Breast epithelium (tissue), 4 donors: ENCODE measurements at regions of chr6 and their contacts with region 1.

Region 1: DNA sequence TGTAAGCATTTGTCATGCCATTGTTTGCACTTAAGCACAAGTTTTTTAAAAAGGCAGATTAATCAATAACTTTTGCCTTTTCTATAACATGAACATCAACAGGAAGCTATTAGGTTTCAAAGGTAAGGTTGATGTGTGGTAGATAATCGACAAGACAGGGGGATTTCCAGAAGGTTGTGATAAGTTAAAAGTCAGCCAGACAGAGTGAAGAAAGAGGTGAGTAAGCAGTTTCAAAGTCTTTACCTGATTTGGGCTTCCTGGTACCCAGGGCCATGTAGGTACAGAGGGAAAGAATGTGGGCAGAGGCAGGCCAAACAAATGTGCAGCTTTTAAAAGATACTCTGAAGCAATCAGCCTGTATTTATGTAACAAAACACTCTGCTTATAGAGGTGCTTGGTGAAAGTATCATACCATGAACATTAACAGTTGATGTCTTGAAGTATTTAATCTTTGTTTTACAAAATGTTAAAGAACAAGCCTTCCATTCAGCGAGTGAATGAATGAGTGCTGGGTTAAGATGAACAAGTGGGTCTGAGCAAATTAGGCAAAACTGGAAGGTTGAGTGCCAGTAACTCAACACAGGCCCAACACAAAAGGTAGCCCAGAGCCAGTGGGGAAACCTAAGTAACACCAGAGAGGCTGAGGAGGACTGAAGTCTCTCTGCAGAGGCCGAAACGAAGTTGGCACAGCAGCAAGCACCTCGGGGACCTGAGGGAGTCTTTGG is 60.2 kb downstream of the LRRC1 start:
- DNase-seq: no peak
- H3K4me3 ChIP-seq: no peak overlapping the region
- H3K27ac ChIP-seq: peak overlapping the region in 1 of 2 donors; percentile 27
- H3K4me1 ChIP-seq: peaks cover 0 to 4% of the 10 kb centered on the region in 2 donors
- H3K27me3 ChIP-seq: no peaks in the 10 kb centered on the region
- CTCF ChIP-seq: no peak
- POLR2A ChIP-seq: no peak

Region 2: DNA sequence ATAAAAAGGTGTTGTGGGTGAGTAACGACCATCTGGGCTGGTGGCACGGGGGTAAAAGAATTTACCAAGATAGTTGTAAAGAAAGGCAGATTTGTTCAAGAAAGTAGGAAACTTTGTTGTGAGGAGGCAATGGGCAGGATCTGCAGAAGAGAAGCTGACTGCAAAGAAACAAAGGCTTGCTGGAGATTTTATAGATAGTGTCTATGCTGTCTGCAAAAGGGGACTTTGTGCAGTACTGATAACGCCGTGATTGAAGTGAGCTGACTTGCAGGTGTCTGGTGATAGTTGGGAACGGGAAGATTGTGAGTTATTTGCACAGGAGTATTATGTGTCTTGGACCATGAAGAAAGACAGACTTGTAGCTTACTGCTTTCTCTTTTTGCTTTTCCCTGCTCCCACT is 908.7 kb before region 1 on chr6:
- intact Hi-C with region 1: loop called (anchors 5 kb)
- DNase-seq: no peak
- H3K4me3 ChIP-seq: no peak overlapping the region
- H3K27ac ChIP-seq: no peak overlapping the region
- H3K4me1 ChIP-seq: no peaks in the 10 kb centered on the region
- H3K27me3 ChIP-seq: no peaks in the 10 kb centered on the region
- CTCF ChIP-seq: no peak
- POLR2A ChIP-seq: no peak

Region 3: DNA sequence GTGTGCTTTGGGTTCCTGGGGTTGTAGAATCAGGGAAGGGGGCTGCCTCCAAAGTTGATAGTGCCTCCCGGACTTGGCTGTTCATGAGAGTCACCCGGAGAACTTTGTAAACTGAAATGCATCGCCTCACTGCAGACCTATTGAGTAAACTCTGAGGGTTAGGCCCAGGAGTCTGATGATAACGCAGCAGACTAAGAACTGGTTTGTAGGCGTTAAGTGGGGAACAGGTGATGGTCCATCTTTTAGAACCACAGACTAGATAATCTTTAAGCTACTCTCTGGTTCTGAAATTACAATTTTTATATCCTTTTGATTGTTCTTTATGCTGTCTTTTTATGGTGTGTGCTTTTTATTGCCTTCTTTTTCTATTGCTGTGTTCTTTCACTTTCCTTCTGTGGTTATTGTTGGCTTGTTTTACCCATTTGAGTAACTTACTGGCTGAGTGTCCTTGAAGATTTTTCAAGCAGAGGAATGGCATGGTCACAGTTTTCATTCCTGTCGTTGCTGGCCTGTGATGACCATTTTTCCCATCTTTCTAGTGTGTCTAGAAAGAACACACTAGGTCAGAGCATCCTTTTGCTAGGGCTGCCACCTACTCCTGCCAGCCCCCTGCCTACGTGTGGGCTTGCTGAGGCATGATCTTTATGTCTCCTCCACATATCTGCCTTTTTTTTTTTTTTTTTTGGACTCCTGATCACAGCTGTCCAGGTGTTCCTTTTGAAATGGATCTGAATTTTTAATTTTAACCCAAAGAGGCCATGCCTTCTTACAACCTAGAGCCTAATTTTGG is 29.3 kb before region 1 on chr6:
- intact Hi-C with region 1: no loop called
- DNase-seq: peak in 1 of 2 donors; percentile 63
- H3K4me3 ChIP-seq: no peak overlapping the region
- H3K27ac ChIP-seq: peak overlapping the region in 1 of 2 donors; percentile 34
- H3K4me1 ChIP-seq: no peaks in the 10 kb centered on the region
- H3K27me3 ChIP-seq: no peaks in the 10 kb centered on the region
- CTCF ChIP-seq: no peak
- POLR2A ChIP-seq: no peak